CD8-positive, alpha-beta T cell (primary cell): ENCODE measurements at regions of chr12 and their contacts with region 1.

Region 1: GRCh38 chr12:59620326-59620725 is 24.5 kb downstream of the SLC16A7 start:
- DNase-seq: no peak
- ATAC-seq: no peak
- H3K4me3 ChIP-seq: no peak overlapping the region
- H3K4me3 Mint-ChIP-seq: no peak overlapping the region
- H3K27ac ChIP-seq: no peak overlapping the region
- H3K27ac Mint-ChIP-seq: no peak overlapping the region
- H3K4me1 ChIP-seq: peaks cover 10% of the 10 kb centered on the region
- H3K4me1 Mint-ChIP-seq: peaks cover 73% of the 10 kb centered on the region
- H3K27me3 ChIP-seq: no peaks in the 10 kb centered on the region
- H3K27me3 Mint-ChIP-seq: no peaks in the 10 kb centered on the region
- CTCF ChIP-seq: no peak

Region 2: GRCh38 chr12:59570134-59570533 is 50.2 kb before region 1 on chr12:
- CTCF ChIA-PET with region 1: no interaction called
- POLR2A ChIA-PET with region 1: no interaction called
- intact Hi-C with region 1: loop called in 1 of 2 experiments (anchors 5 kb)
- DNase-seq: no peak
- ATAC-seq: no peak
- H3K4me3 ChIP-seq: no peak overlapping the region
- H3K4me3 Mint-ChIP-seq: no peak overlapping the region
- H3K27ac ChIP-seq: no peak overlapping the region
- H3K27ac Mint-ChIP-seq: no peak overlapping the region
- H3K4me1 ChIP-seq: no peaks in the 10 kb centered on the region
- H3K4me1 Mint-ChIP-seq: peaks cover 4% of the 10 kb centered on the region
- H3K27me3 ChIP-seq: peaks cover 0 to 2% of the 10 kb centered on the region in 2 experiments
- H3K27me3 Mint-ChIP-seq: no peaks in the 10 kb centered on the region
- CTCF ChIP-seq: no peak

Region 3: DNA sequence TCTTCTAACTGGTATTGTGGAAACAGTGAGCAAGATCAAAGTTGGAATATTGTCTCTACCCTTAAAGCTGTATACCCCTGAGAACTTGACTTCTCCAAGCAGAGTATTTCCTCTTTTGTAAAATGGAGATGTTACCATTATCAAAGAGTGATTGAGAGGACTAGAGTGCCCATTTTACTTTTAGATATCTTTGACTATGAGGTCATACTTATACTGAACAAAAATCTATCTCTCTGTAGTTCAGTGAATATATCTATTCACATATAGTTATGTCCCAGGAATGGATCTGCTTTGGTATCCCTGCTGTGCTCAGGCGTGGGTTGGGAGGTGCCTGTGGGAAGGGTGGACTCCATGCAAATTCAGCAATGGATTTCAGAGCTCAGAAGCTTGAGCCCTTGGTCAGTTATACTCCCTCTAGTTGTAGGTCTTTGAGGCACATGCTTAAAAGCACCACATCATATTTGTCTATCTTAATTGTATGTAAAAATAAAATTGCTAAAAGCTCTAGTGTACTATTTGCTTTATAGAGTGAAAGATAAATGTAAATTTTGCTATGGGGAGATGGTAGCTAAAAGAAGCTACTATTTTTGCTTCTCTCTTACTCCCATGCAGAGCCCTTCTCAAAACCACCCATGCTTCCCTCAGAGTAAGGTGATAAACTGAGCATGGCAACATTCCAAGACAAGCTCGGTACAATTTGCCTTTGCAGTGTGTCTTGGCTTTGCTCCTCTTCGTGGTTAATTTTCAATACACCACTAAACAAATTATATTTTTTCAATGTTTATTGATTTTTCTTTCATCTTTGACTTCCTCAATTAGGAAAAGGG is 30.3 kb after region 1 on chr12:
- CTCF ChIA-PET with region 1: no interaction called
- POLR2A ChIA-PET with region 1: no interaction called
- intact Hi-C with region 1: loop called in 1 of 2 experiments (anchors 2 kb)
- DNase-seq: no peak
- ATAC-seq: no peak
- H3K4me3 ChIP-seq: no peak overlapping the region
- H3K4me3 Mint-ChIP-seq: no peak overlapping the region
- H3K27ac ChIP-seq: no peak overlapping the region
- H3K27ac Mint-ChIP-seq: no peak overlapping the region
- H3K4me1 ChIP-seq: peaks cover 16% of the 10 kb centered on the region
- H3K4me1 Mint-ChIP-seq: peaks cover 45% of the 10 kb centered on the region
- H3K27me3 ChIP-seq: no peaks in the 10 kb centered on the region
- H3K27me3 Mint-ChIP-seq: no peaks in the 10 kb centered on the region
- CTCF ChIP-seq: no peak